CD4-positive, alpha-beta T cell (primary cell): ENCODE measurements at regions of chr5 and their contacts with region 1.

Region 1: DNA sequence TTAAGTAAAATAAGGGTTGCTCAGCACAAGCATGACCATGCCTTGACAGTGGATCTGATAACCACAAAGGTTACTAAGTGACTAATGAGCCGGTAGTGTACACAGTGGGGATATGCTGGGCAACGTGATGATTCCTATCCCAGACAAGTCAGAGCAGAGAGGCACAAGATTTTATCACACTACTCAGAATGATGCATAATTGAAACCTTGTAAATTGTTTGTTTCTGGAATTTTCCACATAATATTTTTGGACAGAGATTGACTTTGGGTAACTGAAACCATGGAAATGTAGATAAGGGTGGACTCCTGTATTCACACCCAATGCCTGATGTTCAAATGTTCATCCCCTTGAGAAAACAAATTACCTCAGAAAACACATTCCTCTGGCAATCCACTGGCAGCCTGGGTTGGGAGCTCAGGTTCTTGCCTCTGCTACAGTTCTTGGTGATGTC is 16.2 kb upstream of the ERAP1 start:
- DNase-seq: no peak
- ATAC-seq: peak; percentile 30
- H3K4me3 ChIP-seq: no peak overlapping the region
- H3K4me3 Mint-ChIP-seq: no peak overlapping the region
- H3K27ac ChIP-seq: no peak overlapping the region
- H3K27ac Mint-ChIP-seq: no peak overlapping the region
- H3K4me1 ChIP-seq: peaks cover 16% of the 10 kb centered on the region
- H3K4me1 Mint-ChIP-seq: peaks cover 49% of the 10 kb centered on the region
- H3K27me3 ChIP-seq: no peaks in the 10 kb centered on the region
- H3K27me3 Mint-ChIP-seq: no peaks in the 10 kb centered on the region
- CTCF ChIP-seq: no peak

Region 2: DNA sequence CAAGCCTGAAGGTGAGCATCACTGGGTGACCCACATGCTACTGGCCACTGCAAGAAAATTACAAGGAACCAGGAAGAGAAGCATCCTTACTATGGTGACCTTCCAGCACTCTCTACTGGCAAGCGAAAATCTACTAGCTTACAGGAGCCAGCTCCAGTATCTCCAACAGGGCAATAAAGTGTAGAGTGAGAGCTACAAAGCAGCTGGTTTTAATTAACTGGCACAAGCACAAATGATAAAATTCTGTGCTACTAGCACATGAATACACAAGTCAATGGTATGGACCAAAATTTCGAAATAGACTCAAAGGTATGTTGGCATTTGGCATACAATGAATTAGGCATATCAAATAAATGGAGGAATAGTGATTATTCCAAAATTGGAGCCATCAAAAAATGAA is 275.0 kb before region 1 on chr5:
- CTCF ChIA-PET with region 1: no interaction called
- POLR2A ChIA-PET with region 1: no interaction called
- intact Hi-C with region 1: loop called in 1 of 2 experiments (anchors 10 kb)
- DNase-seq: no peak
- ATAC-seq: no peak
- H3K4me3 ChIP-seq: no peak overlapping the region
- H3K4me3 Mint-ChIP-seq: no peak overlapping the region
- H3K27ac ChIP-seq: no peak overlapping the region
- H3K27ac Mint-ChIP-seq: no peak overlapping the region
- H3K4me1 ChIP-seq: peaks cover 6% of the 10 kb centered on the region
- H3K4me1 Mint-ChIP-seq: no peaks in the 10 kb centered on the region
- H3K27me3 ChIP-seq: no peaks in the 10 kb centered on the region
- H3K27me3 Mint-ChIP-seq: peaks cover 11% of the 10 kb centered on the region
- CTCF ChIP-seq: no peak